Gastrocnemius medialis (tissue), 4 donors: ENCODE measurements at regions of chr7 and their contacts with region 1.

Region 1: GRCh38 chr7:95545078-95545498 is 51.2 kb downstream of the PDK4 start:
- DNase-seq: peak; percentile 39 to 66
- ATAC-seq: peak; percentile 76 to 78
- H3K4me3 ChIP-seq: peak overlapping the region; percentile 45 to 55 (median 46)
- H3K27ac ChIP-seq: peak overlapping the region; percentile 92 to 100 (median 94)
- H3K4me1 ChIP-seq: peaks cover 50 to 54% of the 10 kb centered on the region in 2 donors
- H3K27me3 ChIP-seq: no peaks in the 10 kb centered on the region
- CTCF ChIP-seq: peak; percentile 53 to 77 (median 67)
- POLR2A ChIP-seq: peak in 1 of 2 donors; percentile 0

Region 2: DNA sequence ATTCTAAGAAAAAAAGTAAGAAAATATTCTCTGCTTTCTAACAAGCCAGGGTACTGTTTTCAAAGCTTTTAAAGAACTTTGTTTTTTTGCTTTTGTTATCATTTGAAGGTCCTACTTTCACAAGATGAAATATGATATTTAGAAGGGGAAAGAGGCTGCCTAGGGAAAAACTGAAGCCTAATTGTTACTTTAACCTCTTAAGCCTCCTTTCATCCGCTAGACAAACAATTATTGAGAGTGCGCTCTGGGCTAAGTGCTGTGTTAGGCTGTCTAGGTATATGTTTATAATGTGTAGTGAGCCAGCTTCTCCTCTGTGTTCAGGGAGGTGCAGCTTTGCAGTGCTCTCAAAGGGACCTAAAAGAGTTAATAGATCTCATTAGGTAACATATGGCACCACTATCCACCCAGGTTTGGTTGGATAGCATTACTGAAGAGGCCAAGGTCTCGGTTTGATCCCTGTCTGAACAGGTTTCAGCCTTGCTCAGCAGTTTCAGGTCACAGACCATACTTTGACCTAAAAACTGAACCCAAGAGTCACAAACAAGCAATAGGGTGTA is 33.3 kb after region 1 on chr7:
- in situ Hi-C with region 1: no loop called
- intact Hi-C with region 1: loop called (anchors 1 kb)
- DNase-seq: no peak
- ATAC-seq: no peak
- H3K4me3 ChIP-seq: no peak overlapping the region
- H3K27ac ChIP-seq: peak overlapping the region; percentile 10 to 60 (median 17)
- H3K4me1 ChIP-seq: no peaks in the 10 kb centered on the region
- H3K27me3 ChIP-seq: no peaks in the 10 kb centered on the region
- CTCF ChIP-seq: no peak
- POLR2A ChIP-seq: no peak

Region 3: DNA sequence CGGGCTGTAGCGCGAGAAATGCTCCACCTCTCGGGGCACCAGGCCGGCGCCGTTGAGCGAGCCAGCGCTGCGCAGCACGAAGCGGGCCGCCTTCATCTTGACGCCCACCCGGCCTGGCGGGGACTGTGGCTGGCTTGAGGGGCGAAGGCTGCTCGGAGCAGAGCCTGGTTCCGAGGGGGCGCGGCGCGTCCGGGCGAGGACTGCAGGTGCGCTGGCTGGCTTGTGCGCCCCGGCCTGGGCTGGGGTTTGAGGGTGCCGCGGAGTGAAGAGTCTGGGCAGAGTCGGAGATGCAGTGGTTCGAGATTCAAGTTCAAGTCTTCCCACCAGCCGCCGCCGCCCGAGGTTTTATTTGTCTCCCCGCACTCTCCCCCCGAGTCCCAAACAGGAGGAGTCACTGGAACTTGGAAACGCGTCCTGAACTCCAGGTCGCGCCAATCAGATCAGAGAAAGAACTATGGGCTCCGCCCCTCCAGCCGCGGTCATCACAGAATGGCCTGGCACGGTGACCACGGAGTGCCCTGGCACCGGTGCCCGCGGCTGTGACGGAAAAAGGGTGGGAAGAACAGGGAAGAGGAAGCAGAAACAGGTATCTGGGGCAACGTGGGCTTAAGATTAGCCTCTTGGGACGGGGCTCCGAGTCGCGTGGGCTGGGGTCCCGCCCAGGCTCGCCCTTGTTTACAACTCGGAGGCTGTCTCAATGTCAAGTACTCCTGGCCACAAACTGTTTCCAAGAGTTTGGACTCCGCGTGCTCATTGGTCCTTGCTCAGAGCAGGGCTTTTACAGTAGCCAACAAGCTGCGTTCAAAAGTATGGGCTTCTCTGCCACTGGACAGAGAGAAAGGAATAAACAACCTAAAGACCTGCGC is 51.3 kb after region 1 on chr7 and contains the start of gene PDK4:
- in situ Hi-C with region 1: loop called in 3 of 4 experiments (anchors 5 to 10 kb)
- intact Hi-C with region 1: loop called (anchors 1 kb)
- DNase-seq: peak; percentile 99
- ATAC-seq: peak; percentile 77 to 80
- H3K4me3 ChIP-seq: peak within 1 kb of the TSS; percentile 78 to 94 (median 87)
- H3K27ac ChIP-seq: peak within 1 kb of the TSS; percentile 91 to 97 (median 96)
- H3K4me1 ChIP-seq: peaks cover 32% of the 10 kb centered on the region in 2 donors
- H3K27me3 ChIP-seq: no peaks in the 10 kb centered on the region
- CTCF ChIP-seq: no peak
- POLR2A ChIP-seq: peak; percentile 95 to 99
- total RNA-seq, gene PDK4: 2,371 to 5,827 (median 4,654) TPM

Region 4: DNA sequence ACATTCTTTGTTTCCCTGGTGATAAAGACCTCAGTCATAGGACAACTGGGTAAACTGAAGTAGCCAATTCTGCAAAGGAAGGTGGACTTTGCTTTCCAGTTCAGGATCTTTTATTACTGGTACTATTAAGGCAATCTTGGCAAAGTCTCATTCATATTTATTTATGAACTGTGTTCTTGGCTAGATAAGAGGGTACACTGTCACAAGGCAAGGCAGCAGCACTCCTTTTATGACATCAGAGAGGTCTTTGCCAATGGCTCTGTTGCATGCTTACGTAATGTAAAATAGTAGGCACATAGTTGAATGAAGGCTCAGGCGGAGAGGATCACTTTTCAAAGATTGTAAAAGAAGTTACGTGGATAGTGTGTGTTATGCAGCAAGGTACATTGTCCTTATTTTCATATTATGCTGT is 114.9 kb after region 1 on chr7:
- in situ Hi-C with region 1: no loop called
- intact Hi-C with region 1: loop called (anchors 1 kb)
- DNase-seq: peak; percentile 65 to 77
- ATAC-seq: peak; percentile 99 to 100
- H3K4me3 ChIP-seq: no peak overlapping the region
- H3K27ac ChIP-seq: peak overlapping the region; percentile 73 to 83 (median 74)
- H3K4me1 ChIP-seq: peaks cover 10 to 15% of the 10 kb centered on the region in 2 donors
- H3K27me3 ChIP-seq: no peaks in the 10 kb centered on the region
- CTCF ChIP-seq: no peak
- POLR2A ChIP-seq: peak in 1 of 2 donors; percentile 55